WTC11 (cell line): ENCODE measurements at regions of chr1 and their contacts with region 1.

Region 1: DNA sequence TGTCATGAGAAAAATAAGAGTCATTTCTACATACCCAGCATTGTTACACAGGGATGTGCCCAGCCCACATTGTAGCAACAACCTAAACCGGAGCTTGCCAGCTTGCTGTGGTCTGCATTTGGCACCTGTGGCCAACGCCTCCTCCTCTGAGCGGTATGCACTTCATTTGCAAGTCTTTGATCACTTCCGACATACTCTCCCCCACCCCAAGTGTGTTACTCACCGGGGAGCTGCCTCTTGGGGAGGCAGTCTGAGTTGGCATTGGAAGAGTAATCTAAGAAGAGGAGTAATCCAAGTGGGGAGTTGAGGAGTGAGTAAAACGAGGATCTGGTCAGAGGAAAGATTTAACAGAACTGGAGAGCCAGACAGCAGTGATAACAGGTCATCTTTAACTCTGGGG is 3.8 kb downstream of the BCL9 start:
- DNase-seq: peak; percentile 63
- ATAC-seq: 0 out of 2 replicates have a peak, but pooled peaks have one; percentile 2
- H3K4me3 Mint-ChIP-seq: peak overlapping the region; percentile 51
- H3K27ac Mint-ChIP-seq: peak overlapping the region; percentile 57
- H3K4me1 Mint-ChIP-seq: peaks cover 66% of the 10 kb centered on the region
- H3K27me3 Mint-ChIP-seq: no peaks in the 10 kb centered on the region; the same call in 1 of the 2 replicates
- CTCF ChIP-seq: no peak

Region 2: DNA sequence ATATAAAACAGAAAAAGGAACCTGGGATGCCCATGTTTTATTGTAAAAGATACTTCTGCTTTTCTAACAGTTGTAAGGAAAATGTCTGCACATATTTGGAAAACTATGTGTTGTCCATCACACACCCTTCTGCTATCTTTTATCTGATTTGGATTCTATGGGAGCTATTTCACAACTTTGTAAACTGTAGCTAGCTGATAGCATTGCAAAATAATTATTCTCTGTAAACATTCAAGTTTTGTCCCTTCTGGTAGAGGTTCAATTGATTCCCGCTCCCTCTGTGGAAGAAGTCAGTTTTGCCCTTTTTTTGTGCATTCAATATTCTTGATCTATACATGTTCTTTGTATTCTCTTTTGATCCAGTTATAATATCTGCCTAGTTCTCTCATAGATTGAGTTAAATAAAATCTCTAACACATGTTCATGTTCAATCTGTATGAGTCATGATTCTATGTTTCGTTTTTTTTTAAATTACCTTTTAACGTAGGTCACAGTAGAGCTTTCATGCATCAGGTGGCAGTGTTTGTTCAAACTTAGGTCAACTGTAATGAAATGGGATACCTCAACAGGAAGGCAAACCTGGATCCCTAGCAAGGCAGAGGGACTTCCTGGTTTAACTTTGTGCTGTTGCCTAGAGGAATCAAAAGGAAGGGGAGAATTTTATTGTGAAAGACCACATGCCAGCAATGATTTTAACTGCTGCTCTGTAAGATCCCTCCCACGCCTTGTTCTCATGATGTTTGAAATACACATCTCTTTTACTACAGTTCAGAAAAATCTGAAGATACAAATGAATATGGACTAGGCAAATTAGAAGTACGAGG is 29.9 kb before region 1 on chr1:
- CTCF ChIA-PET with region 1: interaction called, 11 read pairs
- POLR2A ChIA-PET with region 1: interaction called, 4 read pairs
- DNase-seq: no peak
- ATAC-seq: peak; percentile 95
- H3K4me3 Mint-ChIP-seq: no peak overlapping the region
- H3K27ac Mint-ChIP-seq: no peak overlapping the region
- H3K4me1 Mint-ChIP-seq: peaks cover 22% of the 10 kb centered on the region
- H3K27me3 Mint-ChIP-seq: peaks cover 3% of the 10 kb centered on the region; the same call in 1 of the 2 replicates
- CTCF ChIP-seq: no peak

Region 3: GRCh38 chr1:147567594-147568381 is 22.7 kb after region 1 on chr1:
- CTCF ChIA-PET with region 1: interaction called, 7 read pairs
- POLR2A ChIA-PET with region 1: interaction called, 19 read pairs
- DNase-seq: no peak
- ATAC-seq: peak; percentile 95
- H3K4me3 Mint-ChIP-seq: peak overlapping the region; percentile 66
- H3K27ac Mint-ChIP-seq: peak overlapping the region; percentile 99
- H3K4me1 Mint-ChIP-seq: peaks cover 78% of the 10 kb centered on the region
- H3K27me3 Mint-ChIP-seq: no peaks in the 10 kb centered on the region
- CTCF ChIP-seq: no peak

Region 4: GRCh38 chr1:147654549-147654948 is 109.4 kb after region 1 on chr1:
- CTCF ChIA-PET with region 1: no interaction called
- POLR2A ChIA-PET with region 1: no interaction called
- DNase-seq: no peak
- ATAC-seq: no peak
- H3K4me3 Mint-ChIP-seq: no peak overlapping the region
- H3K27ac Mint-ChIP-seq: no peak overlapping the region
- H3K4me1 Mint-ChIP-seq: no peaks in the 10 kb centered on the region
- H3K27me3 Mint-ChIP-seq: no peaks in the 10 kb centered on the region
- CTCF ChIP-seq: no peak